Activated T-helper 1 cell treated with anti-CD3 and anti-CD28 coated beads, Interleukin-12 subunit alpha, Interleukin-12 subunit beta, Interleukin-2, Interleukin-4 antibody, amounts not matched to agents 30 ng/mL and 10 ng/mL and 1 ng/mL, durations not matched to agents 14 hours and 24 hours and 36 hours (primary cell): ENCODE measurements at regions of chr10 and their contacts with region 1.

Region 1: GRCh38 chr10:70815504-70816219 is at the start of gene SGPL1:
- DNase-seq: peak; percentile 80
- H3K4me3 Mint-ChIP-seq: peak within 1 kb of the TSS; percentile 94
- H3K27ac Mint-ChIP-seq: peak within 1 kb of the TSS; percentile 76
- H3K4me1 Mint-ChIP-seq: peaks cover 28% of the 10 kb centered on the region
- H3K27me3 Mint-ChIP-seq: no peaks in the 10 kb centered on the region
- total RNA-seq, gene SGPL1: 72.9 and 79.0 TPM in 2 replicates

Region 2: DNA sequence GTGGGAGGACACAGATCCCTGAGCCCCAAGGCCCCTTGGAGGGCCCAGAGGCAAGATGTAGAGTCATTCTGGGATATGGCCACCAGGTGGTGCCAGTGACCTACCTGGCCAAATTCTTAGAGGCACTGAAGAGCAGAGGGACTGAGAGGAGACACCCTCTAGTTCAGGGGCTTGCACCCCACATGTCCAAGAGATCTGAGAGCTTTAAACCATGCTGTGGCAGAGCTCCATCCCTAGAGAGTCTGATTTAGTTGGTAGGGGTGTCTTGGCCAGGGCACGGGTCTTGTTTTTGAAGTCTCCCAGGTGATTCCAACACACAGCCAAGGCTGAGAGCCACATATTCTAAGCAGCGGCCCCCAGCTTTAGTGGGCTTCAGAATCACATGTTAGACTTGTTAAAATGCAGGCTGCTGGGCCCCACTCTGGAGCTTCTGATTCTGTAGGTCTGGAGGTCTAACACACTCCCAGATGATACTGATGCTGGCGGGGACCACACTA is 265.7 kb before region 1 on chr10:
- intact Hi-C with region 1: loop called (anchors 1 kb)
- DNase-seq: peak; percentile 58
- H3K4me3 Mint-ChIP-seq: no peak overlapping the region
- H3K27ac Mint-ChIP-seq: no peak overlapping the region
- H3K4me1 Mint-ChIP-seq: peaks cover 4% of the 10 kb centered on the region
- H3K27me3 Mint-ChIP-seq: peaks cover 2% of the 10 kb centered on the region

Region 3: GRCh38 chr10:70832852-70833528 is 17.3 kb after region 1 on chr10:
- intact Hi-C with region 1: loop called (anchors 1 kb)
- DNase-seq: no peak
- H3K4me3 Mint-ChIP-seq: no peak overlapping the region
- H3K27ac Mint-ChIP-seq: peak overlapping the region; percentile 71
- H3K4me1 Mint-ChIP-seq: peaks cover 33% of the 10 kb centered on the region
- H3K27me3 Mint-ChIP-seq: no peaks in the 10 kb centered on the region

Region 4: DNA sequence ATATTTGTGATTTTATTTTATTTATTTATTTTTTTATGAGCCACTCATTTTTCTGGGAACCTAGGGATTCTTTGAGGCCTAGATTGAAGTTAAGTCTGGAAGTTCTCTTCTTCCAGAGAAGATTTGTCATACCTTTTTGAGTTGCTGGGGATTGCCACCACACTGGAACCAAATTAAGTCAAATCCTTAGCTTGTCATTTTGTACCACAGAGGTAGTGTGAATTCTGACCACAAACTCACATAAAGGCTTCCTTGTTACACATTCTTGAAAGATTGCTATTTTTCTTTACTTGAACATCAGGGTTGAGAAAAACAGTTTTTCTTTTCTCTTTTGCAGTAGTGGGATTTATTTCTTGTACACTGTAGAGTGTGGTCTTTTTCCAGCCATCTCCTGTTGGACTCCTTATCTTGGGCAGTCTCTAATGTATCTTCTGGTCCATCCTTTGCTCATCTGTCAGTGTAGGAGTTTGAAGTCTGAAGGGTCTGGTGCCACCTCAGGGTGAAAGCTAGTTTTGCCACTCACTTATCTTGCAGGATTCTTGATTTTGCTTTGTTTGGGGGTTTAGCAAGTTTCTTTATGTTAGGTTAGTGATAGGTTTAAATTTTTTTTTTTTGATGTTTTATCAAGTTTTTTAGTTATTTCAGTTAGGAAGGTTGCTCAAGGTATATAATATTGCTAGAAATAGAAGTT is 48.0 kb after region 1 on chr10:
- intact Hi-C with region 1: loop called (anchors 5 kb)
- DNase-seq: no peak
- H3K4me3 Mint-ChIP-seq: no peak overlapping the region
- H3K27ac Mint-ChIP-seq: peak overlapping the region; percentile 70
- H3K4me1 Mint-ChIP-seq: peaks cover 20% of the 10 kb centered on the region
- H3K27me3 Mint-ChIP-seq: no peaks in the 10 kb centered on the region

Region 5: DNA sequence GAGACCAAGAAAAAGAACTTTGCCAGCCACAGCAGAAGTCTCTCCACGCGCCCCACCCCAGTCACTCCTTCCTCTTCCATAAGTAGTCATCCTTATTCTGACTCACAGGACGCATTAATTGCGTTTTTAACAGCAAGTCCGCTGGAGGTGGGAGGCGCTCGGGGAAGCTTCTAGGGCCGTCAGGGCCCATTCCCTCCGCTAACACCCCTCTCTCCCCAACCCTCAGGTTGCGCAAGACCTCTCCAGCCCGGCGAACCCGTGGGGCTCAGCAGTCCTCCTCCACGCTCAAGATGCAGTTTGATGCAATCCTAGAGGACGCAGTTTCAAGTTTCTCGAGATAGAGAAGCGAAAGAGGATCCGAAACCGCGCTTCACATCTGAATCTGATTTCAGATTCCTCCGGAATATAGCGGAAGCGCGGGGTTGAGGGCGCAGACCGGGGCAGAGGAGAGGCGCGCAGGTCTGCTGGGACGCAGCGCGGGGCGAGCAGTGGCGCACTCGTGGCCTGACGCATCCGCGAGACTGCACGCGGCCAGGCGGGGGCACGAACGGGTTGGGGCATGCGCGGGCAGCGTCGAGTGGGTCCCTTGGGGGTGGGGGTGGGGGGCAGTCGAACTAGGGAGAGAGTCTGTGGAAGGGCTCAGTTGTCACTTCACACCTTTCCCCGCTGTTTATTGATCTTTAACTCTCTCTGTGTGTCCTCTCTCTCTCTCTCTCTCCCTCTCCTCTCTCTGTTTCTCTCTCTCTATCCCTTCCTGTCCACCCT is 1073.1 kb after region 1 on chr10:
- intact Hi-C with region 1: no loop called
- DNase-seq: peak; percentile 44
- H3K4me3 Mint-ChIP-seq: peak overlapping the region; percentile 76
- H3K27ac Mint-ChIP-seq: peak overlapping the region; percentile 74
- H3K4me1 Mint-ChIP-seq: peaks cover 14% of the 10 kb centered on the region
- H3K27me3 Mint-ChIP-seq: peaks cover 13% of the 10 kb centered on the region